ENCODE measurements at regions of chr10 and their contacts with region 1.

Region 1: GRCh38 chr10:128859738-128860386 is 607.2 kb upstream of the MGMT start:
- DNase-seq: peak in 1 of 5 donors; percentile 30
- ATAC-seq: no peak
- H3K4me3 ChIP-seq: no peak overlapping the region
- H3K27ac ChIP-seq: no peak overlapping the region
- H3K4me1 ChIP-seq: peaks cover 0 to 16% (median 12%) of the 10 kb centered on the region in 12 donors
- H3K27me3 ChIP-seq: no peaks in the 10 kb centered on the region
- CTCF ChIP-seq: peak; percentile 36 to 73 (median 66)
- POLR2A ChIP-seq: no peak

Region 2: DNA sequence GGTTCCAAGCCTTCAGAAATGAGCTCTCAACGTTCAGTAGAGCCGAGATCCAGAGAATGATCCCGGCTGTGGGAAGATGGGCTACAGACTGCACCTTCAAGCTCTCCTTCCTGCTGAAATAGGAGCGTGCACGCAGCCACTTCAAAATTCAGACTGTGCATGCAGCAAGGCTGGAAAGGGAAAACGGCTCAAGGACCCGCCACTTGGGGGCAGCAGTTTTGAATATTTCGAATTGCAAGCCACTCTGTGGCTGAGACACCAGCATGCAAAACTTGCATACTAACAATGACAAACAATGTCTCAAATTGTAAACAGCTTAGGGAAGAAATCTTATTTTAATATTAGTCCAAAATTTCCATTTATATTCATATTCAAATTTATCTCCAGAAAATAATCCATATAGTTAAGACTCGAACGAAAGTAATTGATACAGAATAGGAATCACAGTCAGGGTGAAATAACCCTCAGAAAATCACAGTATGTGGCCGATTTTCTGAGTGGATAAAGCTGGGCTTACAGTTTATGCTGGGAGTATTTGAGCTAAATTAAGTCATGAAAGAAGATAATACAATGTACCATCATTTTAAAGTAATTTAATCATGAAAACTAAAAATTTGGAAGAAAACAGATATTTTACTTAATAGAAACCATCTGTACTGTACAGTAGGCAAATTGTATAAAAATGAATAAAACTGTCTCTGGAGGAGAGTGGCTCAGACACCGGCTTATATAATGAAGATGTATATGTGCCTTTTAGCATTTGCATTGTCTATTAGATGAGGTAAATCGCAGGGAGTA is 595.8 kb before region 1 on chr10:
- intact Hi-C with region 1: loop called in 3 of 10 experiments (anchors 10 kb)
- DNase-seq: peak; percentile 39 to 79 (median 44)
- ATAC-seq: peak in 3 of 4 donors; percentile 31 to 64 (median 60)
- H3K4me3 ChIP-seq: no peak overlapping the region
- H3K27ac ChIP-seq: no peak overlapping the region
- H3K4me1 ChIP-seq: no peaks in the 10 kb centered on the region
- H3K27me3 ChIP-seq: peaks cover 7 to 75% (median 31%) of the 10 kb centered on the region in 9 donors
- CTCF ChIP-seq: peak; percentile 44 to 76 (median 59)
- POLR2A ChIP-seq: no peak

Region 3: DNA sequence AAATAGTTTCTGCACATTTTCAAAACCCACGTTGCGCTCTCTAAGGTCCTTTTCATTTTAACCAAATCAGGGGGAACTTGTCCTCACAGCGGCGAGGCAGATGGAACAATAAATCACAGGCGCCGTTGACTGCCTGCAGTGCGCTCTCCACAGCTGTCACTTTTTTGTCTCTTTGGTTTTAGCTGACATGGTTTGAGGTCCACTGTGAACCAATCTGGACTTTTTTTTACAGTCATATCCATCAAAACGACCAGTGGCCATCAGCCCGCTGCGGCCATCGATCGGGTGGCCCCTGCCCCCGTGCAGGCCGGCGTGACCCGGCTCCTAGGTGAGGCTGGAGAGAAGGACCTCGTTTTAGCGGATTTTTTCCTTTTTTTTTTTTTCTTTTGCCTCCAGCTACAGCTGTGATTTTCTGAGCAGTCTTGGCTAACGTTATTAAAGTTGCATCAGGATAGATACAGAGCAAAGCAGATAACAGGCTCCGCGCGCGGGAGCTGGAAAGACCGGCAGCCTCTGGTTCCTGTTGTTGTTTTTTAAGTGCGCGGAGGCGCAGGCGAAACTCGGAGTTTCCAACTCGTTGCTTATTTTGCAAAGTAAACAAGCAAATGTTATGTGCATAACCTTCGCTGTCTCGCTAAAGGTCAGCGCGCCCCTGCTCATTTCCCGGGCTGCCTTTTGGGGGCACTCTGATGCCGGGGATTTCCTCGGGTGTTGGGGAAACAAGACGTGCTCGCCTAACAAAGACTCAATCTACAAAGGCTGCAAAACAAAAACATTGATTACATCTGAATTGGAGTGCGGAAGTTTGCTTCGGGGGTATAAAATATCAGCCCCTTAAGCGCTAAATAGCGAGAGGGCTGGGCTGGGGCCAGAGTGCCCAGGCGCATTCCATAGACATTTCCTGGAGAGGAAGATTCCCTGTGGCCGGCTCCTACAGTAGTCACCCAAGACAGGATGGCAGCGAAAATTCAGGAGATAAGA is 318.8 kb before region 1 on chr10:
- intact Hi-C with region 1: loop called in 3 of 10 experiments (anchors 10 kb)
- DNase-seq: peak in 2 of 5 donors; percentile 10 to 42
- ATAC-seq: peak in 3 of 4 donors; percentile 26 to 63 (median 54)
- H3K4me3 ChIP-seq: peak overlapping the region in 10 of 12 donors; percentile 7 to 46 (median 36)
- H3K27ac ChIP-seq: peak overlapping the region in 5 of 12 donors; percentile 26 to 79 (median 61)
- H3K4me1 ChIP-seq: peaks cover 0 to 17% (median under 1%) of the 10 kb centered on the region in 12 donors
- H3K27me3 ChIP-seq: peaks cover 0 to 59% (median 14%) of the 10 kb centered on the region in 9 donors
- CTCF ChIP-seq: peak in 8 of 12 donors; percentile 10 to 51 (median 31)
- POLR2A ChIP-seq: no peak

Region 4: GRCh38 chr10:128631801-128632241 is 228.0 kb before region 1 on chr10:
- intact Hi-C with region 1: loop called (anchors 1 to 10 kb)
- DNase-seq: no peak
- ATAC-seq: no peak
- H3K4me3 ChIP-seq: no peak overlapping the region
- H3K27ac ChIP-seq: no peak overlapping the region
- H3K4me1 ChIP-seq: peaks cover 0 to 6% (median 0%) of the 10 kb centered on the region in 12 donors
- H3K27me3 ChIP-seq: peaks cover 0 to 9% (median 0%) of the 10 kb centered on the region in 9 donors
- CTCF ChIP-seq: peak; percentile 47 to 78 (median 65)
- POLR2A ChIP-seq: no peak

Region 5: DNA sequence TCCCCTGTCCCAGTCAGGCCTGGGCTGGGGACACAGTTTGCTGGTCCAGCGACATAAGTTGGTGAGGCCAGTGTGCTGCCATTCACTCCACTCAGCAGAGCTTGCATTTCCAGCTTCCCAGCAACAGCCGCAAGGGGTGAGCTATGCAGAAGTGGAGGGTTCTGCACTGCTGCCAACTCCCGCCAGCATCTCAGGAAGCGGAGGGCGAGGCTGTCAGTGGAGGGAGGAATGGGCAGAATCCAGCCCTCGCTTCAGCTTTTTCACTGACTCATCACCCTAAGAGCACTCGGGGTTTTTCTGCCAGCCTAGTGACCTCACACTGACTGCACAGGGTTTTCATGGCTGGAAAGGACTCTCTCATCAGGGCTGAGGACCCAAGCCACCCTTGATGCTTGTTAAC is 108.6 kb before region 1 on chr10:
- intact Hi-C with region 1: loop called in 1 of 10 experiments (anchors 5 kb)
- DNase-seq: peak in 1 of 5 donors; percentile 38
- ATAC-seq: no peak
- H3K4me3 ChIP-seq: no peak overlapping the region
- H3K27ac ChIP-seq: no peak overlapping the region
- H3K4me1 ChIP-seq: no peaks in the 10 kb centered on the region
- H3K27me3 ChIP-seq: peaks cover 0 to 5% (median 0%) of the 10 kb centered on the region in 9 donors
- CTCF ChIP-seq: no peak
- POLR2A ChIP-seq: no peak

Region 6: DNA sequence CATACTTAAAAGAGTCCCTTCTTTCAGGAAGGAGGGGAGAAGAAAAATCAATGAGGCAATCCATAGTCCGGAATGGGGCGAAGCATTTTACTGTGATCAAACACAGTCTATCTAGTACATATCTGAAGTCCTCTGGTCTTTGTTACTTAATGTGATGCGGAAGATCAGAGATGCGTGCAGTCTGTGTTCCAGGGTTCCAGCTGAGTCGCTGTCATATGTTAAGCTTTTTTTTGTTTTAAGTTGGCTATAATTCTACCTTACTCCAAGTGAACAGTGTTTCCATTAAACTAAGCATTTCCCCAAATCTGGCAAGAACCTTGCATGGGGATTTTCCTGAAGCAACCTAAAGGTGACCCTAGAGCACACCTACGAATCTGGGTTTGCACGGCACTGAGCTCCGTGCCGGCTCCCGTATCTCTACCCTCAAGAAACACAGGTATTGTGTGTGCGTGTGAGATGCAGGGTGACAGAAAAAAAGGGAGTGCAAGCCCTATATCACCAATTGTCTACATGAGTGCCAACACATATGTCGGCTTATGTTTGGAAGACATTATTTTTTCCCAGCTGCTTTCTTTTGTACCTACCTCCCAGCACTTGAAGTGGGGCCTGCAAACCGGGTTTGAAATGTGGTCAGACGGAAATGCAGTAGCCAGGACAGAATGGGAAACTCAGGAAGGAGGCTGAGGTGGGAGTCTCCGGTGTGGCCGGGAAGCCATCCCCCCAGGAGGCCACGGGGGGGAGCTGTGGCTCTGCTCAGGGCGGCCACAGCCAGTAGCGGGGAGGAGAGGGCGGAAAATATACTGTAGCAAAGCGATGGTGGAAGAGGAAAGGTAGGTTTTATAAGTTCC is 171.4 kb after region 1 on chr10:
- intact Hi-C with region 1: no loop called
- DNase-seq: peak; percentile 47 to 78 (median 60)
- ATAC-seq: peak in 3 of 4 donors; percentile 88 to 97 (median 92)
- H3K4me3 ChIP-seq: no peak overlapping the region
- H3K27ac ChIP-seq: no peak overlapping the region
- H3K4me1 ChIP-seq: peaks cover 0 to 12% (median 2%) of the 10 kb centered on the region in 12 donors
- H3K27me3 ChIP-seq: peaks cover 0 to 39% (median 6%) of the 10 kb centered on the region in 9 donors
- CTCF ChIP-seq: peak; percentile 85 to 97 (median 93)
- POLR2A ChIP-seq: no peak